ENCODE measurements at regions of chr12 and their contacts with region 1.

Region 1: GRCh38 chr12:98516184-98516873 is 939 bp downstream of the TMPO start:
- DNase-seq: peak; percentile 47 to 52
- ATAC-seq: peak; percentile 65 to 70
- H3K4me3 ChIP-seq: peak overlapping the region; percentile 70 to 93 (median 89)
- H3K27ac ChIP-seq: peak overlapping the region; percentile 86 to 95 (median 93)
- H3K4me1 ChIP-seq: peaks cover 24 to 26% of the 10 kb centered on the region in 2 donors
- H3K27me3 ChIP-seq: no peaks in the 10 kb centered on the region
- CTCF ChIP-seq: peak; percentile 64 to 84 (median 68)
- POLR2A ChIP-seq: peak in 1 of 2 donors; percentile 9

Region 2: GRCh38 chr12:98424726-98425401 is 91.5 kb before region 1 on chr12:
- in situ Hi-C with region 1: no loop called
- intact Hi-C with region 1: loop called (anchors 1 kb)
- DNase-seq: peak in 1 of 2 donors; percentile 19
- ATAC-seq: peak in 1 of 2 donors; percentile 55
- H3K4me3 ChIP-seq: no peak overlapping the region
- H3K27ac ChIP-seq: no peak overlapping the region
- H3K4me1 ChIP-seq: peaks cover 0 to under 1% of the 10 kb centered on the region in 2 donors
- H3K27me3 ChIP-seq: no peaks in the 10 kb centered on the region
- CTCF ChIP-seq: peak; percentile 9 to 61 (median 42)
- POLR2A ChIP-seq: no peak

Region 3: GRCh38 chr12:98490501-98491453 is 25.6 kb before region 1 on chr12:
- in situ Hi-C with region 1: loop called in 1 of 4 experiments (anchors 5 kb)
- intact Hi-C with region 1: loop called (anchors 1 kb)
- DNase-seq: peak; percentile 45 to 73
- ATAC-seq: peak; percentile 90 to 92
- H3K4me3 ChIP-seq: peak overlapping the region in 1 of 4 donors; percentile 4
- H3K27ac ChIP-seq: peak overlapping the region in 2 of 4 donors; percentile 41 to 57
- H3K4me1 ChIP-seq: peaks cover 3% of the 10 kb centered on the region in 2 donors
- H3K27me3 ChIP-seq: no peaks in the 10 kb centered on the region
- CTCF ChIP-seq: peak; percentile 71 to 90 (median 85)
- POLR2A ChIP-seq: no peak

Region 4: DNA sequence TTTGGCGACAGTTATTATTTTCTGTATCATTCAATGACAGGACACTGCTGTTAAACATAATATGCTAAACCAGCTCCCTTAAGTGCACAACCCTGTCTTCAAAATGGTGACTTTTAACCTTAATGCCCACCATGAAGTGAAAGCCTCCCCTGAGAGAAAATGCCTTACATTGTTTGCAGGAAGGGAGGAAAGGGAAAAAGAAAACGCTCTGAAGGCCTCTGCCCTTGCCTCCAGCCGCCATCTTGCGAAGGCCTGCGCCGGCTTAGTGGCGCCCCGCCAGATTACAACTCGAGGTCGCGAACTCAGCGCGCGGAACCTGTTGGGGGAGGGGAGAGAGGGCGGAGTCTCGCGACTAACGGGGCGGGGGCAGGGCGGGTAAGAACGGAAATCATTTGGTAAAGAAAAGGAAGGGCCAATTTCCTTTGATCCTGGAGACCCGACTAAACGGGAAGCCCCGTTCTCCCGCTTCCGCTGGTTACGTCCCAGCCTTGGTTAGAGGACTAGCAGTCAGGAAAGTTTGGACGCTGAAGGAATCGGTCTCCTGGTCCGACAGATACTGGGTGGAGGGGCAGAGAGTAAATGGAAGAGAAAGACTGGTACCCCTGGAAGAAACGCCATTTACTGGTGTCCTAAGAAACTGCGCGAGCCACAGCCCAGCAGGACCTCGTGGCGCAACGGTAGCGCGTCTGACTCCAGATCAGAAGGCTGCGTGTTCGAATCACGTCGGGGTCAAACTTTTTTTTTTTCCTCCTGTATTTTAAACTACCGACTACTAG is 12.5 kb before region 1 on chr12:
- in situ Hi-C with region 1: no loop called
- intact Hi-C with region 1: loop called (anchors 1 kb)
- DNase-seq: peak; percentile 88 to 92
- ATAC-seq: peak; percentile 91 to 92
- H3K4me3 ChIP-seq: peak overlapping the region; percentile 57 to 70 (median 68)
- H3K27ac ChIP-seq: peak overlapping the region; percentile 87 to 96 (median 92)
- H3K4me1 ChIP-seq: no peaks in the 10 kb centered on the region
- H3K27me3 ChIP-seq: no peaks in the 10 kb centered on the region
- CTCF ChIP-seq: no peak
- POLR2A ChIP-seq: peak; percentile 24 to 45

Region 5: DNA sequence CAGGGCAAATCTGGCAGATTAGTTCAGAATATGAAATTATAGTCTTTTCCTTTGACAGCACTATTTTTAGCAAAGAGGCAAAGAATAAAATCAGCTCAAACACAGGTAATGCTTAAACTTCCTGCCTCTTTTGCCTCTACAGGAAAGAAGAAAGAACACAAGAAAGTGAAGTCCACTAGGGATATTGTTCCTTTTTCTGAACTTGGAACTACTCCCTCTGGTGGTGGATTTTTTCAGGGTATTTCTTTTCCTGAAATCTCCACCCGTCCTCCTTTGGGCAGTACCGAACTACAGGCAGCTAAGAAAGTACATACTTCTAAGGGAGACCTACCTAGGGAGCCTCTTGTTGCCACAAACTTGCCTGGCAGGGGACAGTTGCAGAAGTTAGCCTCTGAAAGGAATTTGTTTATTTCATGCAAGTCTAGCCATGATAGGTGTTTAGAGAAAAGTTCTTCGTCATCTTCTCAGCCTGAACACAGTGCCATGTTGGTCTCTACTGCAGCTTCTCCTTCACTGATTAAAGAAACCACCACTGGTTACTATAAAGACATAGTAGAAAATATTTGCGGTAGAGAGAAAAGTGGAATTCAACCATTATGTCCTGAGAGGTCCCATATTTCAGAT is 16.5 kb after region 1 on chr12:
- in situ Hi-C with region 1: no loop called
- intact Hi-C with region 1: loop called (anchors 1 kb)
- DNase-seq: no peak
- ATAC-seq: peak; percentile 58 to 67
- H3K4me3 ChIP-seq: no peak overlapping the region
- H3K27ac ChIP-seq: peak overlapping the region; percentile 69 to 75 (median 70)
- H3K4me1 ChIP-seq: peaks cover 13 to 21% of the 10 kb centered on the region in 2 donors
- H3K27me3 ChIP-seq: no peaks in the 10 kb centered on the region
- CTCF ChIP-seq: peak; percentile 38 to 64 (median 55)
- POLR2A ChIP-seq: no peak

Region 6: GRCh38 chr12:98593351-98594049 is 77.2 kb after region 1 on chr12 and contains the start of gene SLC25A3:
- in situ Hi-C with region 1: loop called in 1 of 4 experiments (anchors 10 kb)
- intact Hi-C with region 1: loop called (anchors 1 kb)
- DNase-seq: peak; percentile 95 to 98
- ATAC-seq: peak; percentile 92 to 95
- H3K4me3 ChIP-seq: peak within 1 kb of the TSS; percentile 82 to 96 (median 88)
- H3K27ac ChIP-seq: peak within 1 kb of the TSS; percentile 94 to 100 (median 96)
- H3K4me1 ChIP-seq: peaks cover 24 to 32% of the 10 kb centered on the region in 2 donors
- H3K27me3 ChIP-seq: no peaks in the 10 kb centered on the region
- CTCF ChIP-seq: no peak
- POLR2A ChIP-seq: peak; percentile 98
- total RNA-seq, gene SLC25A3: 870 to 1,994 (median 1,275) TPM

Measured in gastrocnemius medialis (tissue), 4 donors.